ENCODE measurements at regions of chr12 and their contacts with region 1.

Region 1: DNA sequence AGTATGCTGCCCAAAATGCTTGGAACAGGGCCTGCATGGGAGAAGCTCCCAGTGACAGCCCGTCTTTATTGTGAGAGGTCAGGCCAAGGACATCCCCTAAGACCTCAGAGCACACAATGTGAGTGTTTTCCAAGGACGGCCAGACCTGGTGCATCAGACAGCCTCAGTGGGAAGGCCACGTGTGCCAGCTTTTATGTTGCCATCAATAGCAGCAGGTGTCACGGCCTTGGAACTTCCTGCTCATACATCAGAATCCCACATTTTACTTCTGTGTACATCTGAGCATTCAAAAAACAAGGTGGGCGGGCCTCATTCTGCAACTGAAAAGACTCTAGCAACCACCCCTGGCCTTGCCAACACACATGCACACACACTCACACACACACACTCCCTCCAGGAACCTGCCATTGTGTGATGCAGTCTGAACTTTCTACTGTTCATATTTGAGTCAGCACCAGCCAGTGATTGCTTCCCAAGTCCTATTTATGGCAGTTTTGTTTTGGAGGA is 753.1 kb upstream of the TBX3 start:
- DNase-seq: no peak
- ATAC-seq: peak; percentile 10

Region 2: DNA sequence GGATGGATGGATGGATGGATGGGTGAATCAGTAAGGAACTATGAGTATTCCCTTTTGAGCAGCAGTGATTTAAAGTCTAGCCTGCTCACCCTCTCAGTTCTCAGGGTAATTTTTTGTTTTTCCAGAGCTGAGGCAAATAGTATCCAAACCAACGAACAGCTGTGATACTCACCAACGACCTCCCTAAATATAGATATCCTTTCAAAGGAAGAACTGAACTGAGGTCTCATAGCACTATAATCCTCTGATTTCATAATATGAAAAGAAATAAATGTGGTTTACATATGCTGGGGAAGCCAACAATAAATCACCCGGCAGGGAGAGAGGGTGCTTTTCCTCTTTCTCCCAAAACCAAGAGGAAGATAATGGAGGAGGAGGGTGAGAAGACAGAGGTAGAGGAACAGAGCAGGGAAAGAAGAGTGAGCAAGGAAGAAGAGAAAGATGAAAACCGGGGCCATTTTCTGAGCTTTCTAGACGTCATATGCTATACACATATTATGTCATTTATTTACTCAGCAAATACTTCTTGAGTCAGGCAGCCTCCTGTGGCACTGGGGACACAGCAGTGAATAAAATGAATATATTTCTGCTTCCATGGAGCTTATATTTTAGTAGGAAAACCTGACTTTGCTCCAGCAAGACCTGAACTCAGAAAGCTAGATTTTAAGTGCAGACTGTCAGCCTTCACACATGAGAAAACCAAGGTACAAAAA is 42.5 kb before region 1 on chr12:
- intact Hi-C with region 1: no loop called
- DNase-seq: no peak
- ATAC-seq: no peak

Region 3: GRCh38 chr12:115623764-115624334 is 186.7 kb after region 1 on chr12:
- intact Hi-C with region 1: loop called (anchors 5 kb)
- DNase-seq: peak; percentile 75
- ATAC-seq: peak; percentile 67

Region 4: DNA sequence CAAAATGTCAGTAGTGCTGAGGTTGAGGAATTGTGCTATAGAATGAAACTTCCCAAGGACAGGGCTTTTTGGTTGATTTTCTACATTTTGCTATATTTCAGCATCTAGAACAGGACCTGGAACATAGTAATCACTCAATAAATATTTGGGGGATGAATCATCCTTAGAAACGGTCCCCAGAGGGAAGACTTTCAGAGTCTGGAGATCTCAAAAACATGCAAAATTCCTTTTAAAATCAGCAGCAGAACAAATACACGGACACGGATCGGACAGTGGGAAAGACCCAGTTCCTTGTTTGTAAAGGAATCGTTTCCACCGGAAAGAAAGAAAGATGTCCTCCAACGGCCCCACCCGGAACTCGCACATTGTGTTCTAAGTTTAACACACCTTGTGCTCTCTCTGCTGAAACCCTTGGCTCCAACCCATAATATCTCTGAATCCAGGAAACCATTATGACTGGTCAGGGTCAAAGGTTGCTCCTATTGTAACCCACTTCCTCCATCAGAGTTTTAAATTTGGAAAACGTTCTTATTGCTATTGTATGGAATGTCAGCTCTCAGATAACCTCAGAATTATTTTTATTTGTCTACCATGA is 223.2 kb after region 1 on chr12:
- intact Hi-C with region 1: loop called (anchors 2 kb)
- DNase-seq: no peak
- ATAC-seq: peak; percentile 50